ENCODE measurements at regions of chr15 and their contacts with region 1.

Region 1: DNA sequence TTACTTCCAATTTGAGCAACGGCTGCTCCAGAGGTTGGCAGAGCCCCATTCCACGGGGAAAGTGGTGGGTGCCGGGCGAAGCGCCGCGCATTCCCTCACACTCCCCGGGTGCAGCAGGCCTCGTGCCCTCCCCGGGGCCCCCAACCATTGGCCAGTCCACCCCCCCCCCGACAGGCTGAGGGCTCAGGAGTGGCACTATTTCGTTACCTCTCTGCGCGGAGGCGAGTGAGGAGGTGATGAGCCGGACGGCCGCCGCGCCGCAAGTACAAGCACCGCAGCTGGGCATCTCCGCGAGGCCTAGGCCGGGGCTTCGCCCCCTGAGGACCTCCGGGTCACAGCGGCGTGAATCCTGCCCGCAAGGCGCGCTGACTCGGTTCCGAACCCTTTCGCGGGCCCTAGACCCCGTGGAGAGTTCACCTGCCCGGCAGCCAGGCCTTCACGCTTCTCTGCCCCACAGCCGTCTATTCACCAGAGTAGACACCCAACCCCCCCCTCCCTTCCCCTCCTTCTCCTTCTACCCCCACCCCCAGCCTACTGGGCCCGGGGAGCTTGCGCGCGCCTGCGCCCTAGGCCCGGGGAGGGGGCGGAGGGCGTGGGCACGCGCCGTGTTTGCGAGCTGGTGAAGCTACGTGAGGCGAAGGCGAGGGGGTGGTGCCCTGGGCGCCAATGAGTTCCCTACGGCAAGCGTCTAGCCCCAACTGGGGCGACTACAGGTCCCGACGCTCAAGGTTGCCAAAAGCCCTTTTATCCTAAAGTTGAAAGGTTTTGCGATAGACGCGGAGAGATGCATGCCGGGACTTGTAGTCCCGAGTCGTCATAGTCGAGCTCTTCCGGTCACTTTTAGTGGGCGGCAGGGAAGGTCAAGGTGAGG is at the start of gene CLPX:
- DNase-seq: peak; percentile 85 to 89
- H3K4me3 ChIP-seq: peak within 1 kb of the TSS; percentile 96
- H3K27ac ChIP-seq: peak within 1 kb of the TSS; percentile 69
- H3K4me1 ChIP-seq: no peaks in the 10 kb centered on the region
- H3K27me3 ChIP-seq: no peaks in the 10 kb centered on the region
- CTCF ChIP-seq: no peak
- total RNA-seq, gene CLPX: 41.0 and 44.1 TPM in 2 replicates

Region 2: DNA sequence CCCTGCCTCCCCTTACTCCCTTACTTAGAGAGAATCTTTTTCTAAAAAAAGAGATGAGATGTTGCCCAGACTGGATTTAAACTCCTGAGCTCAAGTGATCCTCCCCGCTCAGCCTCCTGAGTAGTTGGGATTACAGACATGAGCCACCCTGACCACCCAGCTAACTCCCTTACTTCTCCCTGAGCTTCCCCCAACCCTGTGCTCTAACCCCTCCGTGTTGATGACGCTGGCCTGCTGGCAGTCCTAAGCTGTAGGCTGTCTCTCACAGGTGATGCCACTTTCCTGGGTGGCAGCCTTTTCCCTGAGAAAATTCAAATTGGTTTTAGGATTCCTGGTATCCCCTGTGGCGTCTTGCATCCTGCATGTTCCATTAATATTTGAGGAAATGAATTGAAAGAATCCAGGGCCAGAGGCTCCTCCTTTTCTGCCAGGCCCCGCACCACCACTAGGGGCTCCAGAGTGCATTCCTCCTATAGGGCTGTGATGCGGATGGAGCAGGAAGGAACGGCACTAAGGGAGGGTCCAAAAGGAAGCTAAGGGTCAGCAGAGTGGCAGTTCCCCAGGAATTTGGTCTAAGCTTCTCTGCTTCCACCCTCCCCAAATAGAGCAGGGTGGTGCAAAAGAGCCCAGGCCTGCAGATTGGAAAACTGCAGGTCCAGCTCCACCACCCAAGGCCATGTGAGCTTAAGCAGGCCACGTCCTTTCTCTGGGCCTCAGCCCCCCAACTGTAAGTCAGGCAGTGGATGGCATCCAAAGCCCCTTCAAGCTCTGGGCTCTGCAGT is 1239.9 kb before region 1 on chr15:
- CTCF ChIA-PET with region 1: no interaction called
- POLR2A ChIA-PET with region 1: no interaction called
- intact Hi-C with region 1: no loop called
- DNase-seq: peak; percentile 38 to 79
- H3K4me3 ChIP-seq: no peak overlapping the region; the same call in 1 of the 2 replicates
- H3K27ac ChIP-seq: peak overlapping the region; percentile 68
- H3K4me1 ChIP-seq: peaks cover 12% of the 10 kb centered on the region
- H3K27me3 ChIP-seq: no peaks in the 10 kb centered on the region
- CTCF ChIP-seq: peak; percentile 89

Region 3: DNA sequence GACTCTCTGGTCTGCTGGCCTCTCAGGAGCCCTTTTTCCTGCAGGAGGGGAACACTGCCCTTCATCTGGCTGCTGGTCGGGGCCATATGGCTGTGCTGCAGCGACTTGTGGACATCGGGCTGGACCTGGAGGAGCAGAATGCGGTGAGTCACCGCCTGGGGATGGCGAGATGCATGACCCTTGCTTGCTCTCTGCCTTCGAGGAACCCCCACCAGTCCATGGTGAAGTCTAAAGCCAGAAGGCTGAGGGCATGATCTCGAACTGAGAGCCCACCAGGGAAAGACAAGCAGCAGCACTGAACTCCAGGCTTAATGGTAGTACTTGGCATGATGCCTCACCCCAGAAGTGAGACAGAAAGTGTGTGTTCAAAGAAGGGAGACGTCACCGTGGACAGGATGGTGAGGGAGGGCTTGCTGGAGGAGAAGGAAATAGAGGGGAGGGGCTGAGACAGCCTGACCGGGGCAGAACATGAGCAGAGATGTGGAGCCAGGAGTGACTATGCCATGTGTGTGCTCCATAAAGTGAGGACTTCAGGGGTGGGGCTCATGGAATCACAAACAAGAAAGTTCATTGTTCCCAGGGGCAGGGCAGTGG is 254.2 kb before region 1 on chr15:
- CTCF ChIA-PET with region 1: no interaction called
- POLR2A ChIA-PET with region 1: no interaction called
- intact Hi-C with region 1: no loop called
- DNase-seq: peak in 1 of 2 experiments; percentile 24
- H3K4me3 ChIP-seq: no peak overlapping the region
- H3K27ac ChIP-seq: no peak overlapping the region
- H3K4me1 ChIP-seq: no peaks in the 10 kb centered on the region
- H3K27me3 ChIP-seq: no peaks in the 10 kb centered on the region
- CTCF ChIP-seq: no peak

Region 4: GRCh38 chr15:65054333-65055200 is 130.5 kb before region 1 on chr15:
- CTCF ChIA-PET with region 1: interaction called, 3 read pairs
- POLR2A ChIA-PET with region 1: interaction called, 11 read pairs
- intact Hi-C with region 1: loop called (anchors 10 kb)
- DNase-seq: peak in 1 of 2 experiments; percentile 71
- H3K4me3 ChIP-seq: no peak overlapping the region
- H3K27ac ChIP-seq: no peak overlapping the region
- H3K4me1 ChIP-seq: peaks cover 36% of the 10 kb centered on the region
- H3K27me3 ChIP-seq: no peaks in the 10 kb centered on the region
- CTCF ChIP-seq: peak; percentile 80

Region 5: GRCh38 chr15:65209701-65210618 is 24.9 kb after region 1 on chr15:
- CTCF ChIA-PET with region 1: no interaction called
- POLR2A ChIA-PET with region 1: interaction called, 19 read pairs
- intact Hi-C with region 1: no loop called
- DNase-seq: peak; percentile 44 to 86
- H3K4me3 ChIP-seq: no peak overlapping the region
- H3K27ac ChIP-seq: peak overlapping the region; percentile 50
- H3K4me1 ChIP-seq: peaks cover 34% of the 10 kb centered on the region
- H3K27me3 ChIP-seq: no peaks in the 10 kb centered on the region
- CTCF ChIP-seq: no peak

Region 6: DNA sequence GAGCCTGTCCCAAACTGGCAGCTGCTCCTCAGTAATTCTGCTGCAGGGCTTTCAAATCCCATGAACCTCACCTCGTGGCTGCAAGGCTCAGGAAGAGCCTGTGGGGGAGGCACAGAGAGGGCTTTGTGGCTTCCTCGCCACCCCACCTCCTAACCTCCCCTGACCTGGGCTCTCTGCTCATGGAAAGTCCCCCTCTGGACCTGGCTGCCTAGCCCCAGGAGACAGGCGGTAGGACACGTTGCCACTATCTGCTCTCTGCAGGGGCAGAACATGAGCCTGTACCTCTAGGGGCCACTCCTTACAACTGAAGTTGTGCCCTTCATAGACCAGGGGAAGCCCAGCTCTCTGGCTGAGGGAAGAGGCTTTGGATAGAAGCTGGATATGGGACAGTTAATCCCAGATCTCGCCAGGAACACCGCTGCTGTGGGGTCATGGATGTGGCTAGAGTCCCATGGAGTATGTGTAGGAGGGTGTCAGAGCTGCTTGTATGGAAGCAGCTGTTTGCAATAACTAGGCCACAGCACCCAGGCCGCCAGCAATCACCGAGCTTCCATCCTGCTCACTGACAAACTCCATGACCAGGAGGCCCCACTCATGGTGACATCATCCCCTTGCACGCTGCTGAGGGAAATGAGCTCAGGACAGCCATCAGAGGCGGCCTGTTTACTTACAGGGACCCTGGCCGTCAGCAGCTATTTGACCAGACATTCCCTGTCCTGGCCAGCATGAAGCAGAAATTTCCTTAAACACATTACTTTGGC is 60.2 kb after region 1 on chr15:
- CTCF ChIA-PET with region 1: no interaction called
- POLR2A ChIA-PET with region 1: no interaction called
- intact Hi-C with region 1: no loop called
- DNase-seq: no peak
- H3K4me3 ChIP-seq: no peak overlapping the region
- H3K27ac ChIP-seq: no peak overlapping the region
- H3K4me1 ChIP-seq: no peaks in the 10 kb centered on the region
- H3K27me3 ChIP-seq: no peaks in the 10 kb centered on the region
- CTCF ChIP-seq: no peak

Region 7: DNA sequence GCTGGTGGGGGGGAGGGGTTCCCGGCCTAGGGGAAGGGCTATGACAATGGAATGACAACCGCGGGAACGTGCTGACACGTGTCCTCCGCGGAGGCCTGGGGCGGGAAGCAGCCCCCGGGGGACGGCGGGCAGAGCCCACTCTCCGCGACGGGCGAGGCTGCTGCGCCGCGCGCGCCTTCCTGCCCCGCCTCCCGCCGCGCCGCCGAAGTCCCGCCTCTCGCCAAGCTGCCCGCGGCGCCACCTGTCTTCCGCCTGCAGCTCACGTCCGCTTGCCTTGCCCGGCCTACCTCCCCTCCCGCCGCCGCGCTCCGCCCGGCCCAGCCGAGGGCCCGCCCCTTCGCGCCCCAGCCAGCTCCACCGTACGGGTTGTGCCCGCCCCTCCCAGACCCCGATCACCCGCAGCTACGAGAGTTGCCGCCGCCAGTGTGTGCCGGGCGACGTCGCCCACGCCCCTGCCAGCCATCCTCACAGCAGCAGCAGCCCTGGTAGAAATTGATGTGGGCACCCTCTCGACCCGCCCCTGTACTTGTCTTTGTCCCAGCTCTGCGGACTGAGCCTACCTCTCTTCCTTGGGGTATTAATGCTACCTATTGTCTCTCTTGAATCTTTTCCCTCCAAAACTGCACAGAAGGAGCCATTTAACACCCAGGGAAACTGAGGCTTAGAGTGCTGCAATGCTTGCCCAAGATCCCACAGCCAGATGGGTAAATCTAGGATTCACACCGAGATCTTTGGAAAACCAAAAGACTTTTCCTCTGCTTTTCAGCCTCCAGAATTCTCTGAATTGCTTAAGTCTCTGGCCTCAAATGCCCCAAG is 101.8 kb after region 1 on chr15 and contains the start of gene PARP16:
- CTCF ChIA-PET with region 1: interaction called, 12 read pairs
- POLR2A ChIA-PET with region 1: interaction called, 6 read pairs
- intact Hi-C with region 1: no loop called
- DNase-seq: peak; percentile 65 to 94
- H3K4me3 ChIP-seq: peak within 1 kb of the TSS; percentile 74
- H3K27ac ChIP-seq: no peak within 1 kb of the TSS
- H3K4me1 ChIP-seq: peaks cover 14% of the 10 kb centered on the region
- H3K27me3 ChIP-seq: no peaks in the 10 kb centered on the region
- CTCF ChIP-seq: no peak
- total RNA-seq, gene PARP16: 12.3 TPM in 2 replicates

Region 8: DNA sequence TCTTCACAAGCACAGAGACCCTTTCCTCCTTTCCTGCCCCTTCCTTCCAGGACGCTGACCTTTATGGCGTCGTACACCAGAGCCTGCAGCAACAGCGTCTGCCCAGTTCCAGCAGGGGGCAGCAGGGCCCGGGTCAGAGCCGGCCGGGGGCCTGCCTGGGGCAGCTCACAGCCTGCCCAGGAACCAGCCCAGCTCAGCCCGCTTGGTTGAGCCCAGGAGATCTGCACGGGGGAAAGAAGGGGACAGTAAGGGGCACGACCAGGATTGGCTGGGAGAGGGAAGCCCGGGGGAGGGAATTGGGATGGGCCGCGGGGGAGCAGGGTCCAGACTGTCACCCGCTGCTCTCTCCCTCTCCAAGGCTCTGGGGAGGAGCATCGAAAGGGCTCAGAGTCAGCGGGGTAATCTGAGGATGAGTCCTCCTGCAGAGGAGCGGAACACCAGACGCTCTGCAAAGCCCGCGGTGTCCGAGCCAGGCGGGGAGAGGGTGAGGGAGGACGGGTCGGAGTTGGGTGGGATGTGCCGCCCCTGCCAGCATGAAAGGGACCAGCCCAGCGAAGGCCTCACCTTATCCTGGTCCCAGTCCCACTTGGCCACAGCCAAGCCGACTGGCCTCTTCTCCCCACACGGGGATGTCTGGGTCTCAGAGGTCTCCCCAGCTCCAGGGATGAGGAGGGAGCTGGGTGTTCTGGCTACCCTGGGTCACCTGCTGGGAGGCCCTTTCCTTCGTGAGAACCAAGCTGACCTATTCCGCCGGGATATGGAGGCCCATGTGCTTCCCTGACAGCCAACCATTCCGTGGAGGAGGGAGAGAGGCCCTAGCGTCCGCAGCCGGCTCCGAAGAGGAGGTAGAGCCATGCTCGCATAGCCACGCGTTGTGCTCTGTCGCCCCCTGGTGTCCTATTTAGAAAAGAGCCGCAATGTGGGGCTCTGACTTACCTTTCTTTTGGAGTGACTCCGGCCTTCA is 200.1 kb after region 1 on chr15:
- CTCF ChIA-PET with region 1: no interaction called
- POLR2A ChIA-PET with region 1: no interaction called
- intact Hi-C with region 1: loop called (anchors 1 kb)
- DNase-seq: peak; percentile 57 to 85
- H3K4me3 ChIP-seq: peak overlapping the region; percentile 46
- H3K27ac ChIP-seq: no peak overlapping the region
- H3K4me1 ChIP-seq: peaks cover 4% of the 10 kb centered on the region; the same call in 1 of the 2 replicates
- H3K27me3 ChIP-seq: peaks cover 18% of the 10 kb centered on the region
- CTCF ChIP-seq: peak; percentile 80

Region 9: GRCh38 chr15:67134067-67134838 is 1949.2 kb after region 1 on chr15:
- CTCF ChIA-PET with region 1: no interaction called
- POLR2A ChIA-PET with region 1: no interaction called
- intact Hi-C with region 1: no loop called
- DNase-seq: no peak
- H3K4me3 ChIP-seq: no peak overlapping the region
- H3K27ac ChIP-seq: peak overlapping the region; percentile 32; the same call in 1 of the 2 replicates
- H3K4me1 ChIP-seq: peaks cover 52% of the 10 kb centered on the region
- H3K27me3 ChIP-seq: no peaks in the 10 kb centered on the region
- CTCF ChIP-seq: no peak